ENCODE measurements at regions of chr2 and their contacts with region 1.

Region 1: GRCh38 chr2:181143790-181144300 is 163.4 kb downstream of the UBE2E3 start:
- DNase-seq: peak in 25 of 35 experiments; percentile 7 to 74 (median 39)
- ATAC-seq: peak; percentile 64 to 87 (median 73)
- H3K4me3 ChIP-seq: no peak overlapping the region
- H3K4me3 Mint-ChIP-seq: peak overlapping the region in 2 of 3 donors; percentile 18 to 48
- H3K27ac ChIP-seq: peak overlapping the region; percentile 88
- H3K27ac Mint-ChIP-seq: peak overlapping the region; percentile 90 to 100
- H3K4me1 ChIP-seq: peaks cover 33 to 63% of the 10 kb centered on the region in 2 experiments
- H3K4me1 Mint-ChIP-seq: peaks cover 73 to 79% (median 74%) of the 10 kb centered on the region in 3 donors
- H3K27me3 ChIP-seq: no peaks in the 10 kb centered on the region
- H3K27me3 Mint-ChIP-seq: no peaks in the 10 kb centered on the region

Region 2: DNA sequence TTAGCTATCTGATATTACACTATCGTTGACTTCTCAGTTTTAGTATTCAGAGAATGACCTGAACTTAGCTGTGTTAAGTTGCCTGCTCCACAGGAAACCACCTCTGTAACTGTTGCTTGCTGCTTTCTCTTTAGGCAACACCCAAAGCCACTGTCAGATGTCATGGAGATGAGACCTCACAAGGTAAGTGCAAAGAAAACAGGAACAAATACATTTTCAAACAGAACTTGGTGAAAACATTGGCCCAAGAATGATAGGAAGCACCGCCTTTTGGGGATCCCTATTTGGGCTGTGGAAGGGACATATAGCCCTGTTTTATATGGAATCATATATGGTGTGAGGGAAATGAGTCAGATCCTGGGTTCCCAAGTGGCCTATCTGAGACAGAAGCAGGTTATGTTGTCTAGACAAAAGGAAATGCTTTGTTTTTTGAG is 20.0 kb before region 1 on chr2:
- CTCF ChIA-PET with region 1: interaction called, 3 to 8 read pairs
- POLR2A ChIA-PET with region 1: interaction called, 6 to 10 read pairs
- DNase-seq: peak in 34 of 35 experiments; percentile 24 to 89 (median 60)
- ATAC-seq: peak; percentile 94 to 98 (median 96)
- H3K4me3 ChIP-seq: peak overlapping the region; percentile 6 to 39
- H3K4me3 Mint-ChIP-seq: peak overlapping the region; percentile 65 to 72 (median 70)
- H3K27ac ChIP-seq: peak overlapping the region; percentile 100
- H3K27ac Mint-ChIP-seq: peak overlapping the region; percentile 96 to 100
- H3K4me1 ChIP-seq: peaks cover 28 to 51% of the 10 kb centered on the region in 2 experiments
- H3K4me1 Mint-ChIP-seq: peaks cover 63 to 81% (median 73%) of the 10 kb centered on the region in 3 donors
- H3K27me3 ChIP-seq: no peaks in the 10 kb centered on the region
- H3K27me3 Mint-ChIP-seq: no peaks in the 10 kb centered on the region

Region 3: GRCh38 chr2:181305301-181306123 is 161.7 kb after region 1 on chr2:
- CTCF ChIA-PET with region 1: interaction called in 1 of 2 experiments, 3 read pairs
- POLR2A ChIA-PET with region 1: interaction called in 1 of 2 experiments, 14 read pairs
- DNase-seq: peak in 20 of 35 experiments; percentile 2 to 63 (median 24)
- ATAC-seq: peak; percentile 50 to 77 (median 60)
- H3K4me3 ChIP-seq: peak overlapping the region in 1 of 2 donors; percentile 4
- H3K4me3 Mint-ChIP-seq: peak overlapping the region; percentile 42 to 80 (median 51)
- H3K27ac ChIP-seq: peak overlapping the region; percentile 98
- H3K27ac Mint-ChIP-seq: peak overlapping the region; percentile 96 to 100
- H3K4me1 ChIP-seq: peaks cover 44 to 79% of the 10 kb centered on the region in 2 experiments
- H3K4me1 Mint-ChIP-seq: peaks cover 74 to 82% (median 82%) of the 10 kb centered on the region in 3 donors
- H3K27me3 ChIP-seq: no peaks in the 10 kb centered on the region
- H3K27me3 Mint-ChIP-seq: no peaks in the 10 kb centered on the region

Region 4: DNA sequence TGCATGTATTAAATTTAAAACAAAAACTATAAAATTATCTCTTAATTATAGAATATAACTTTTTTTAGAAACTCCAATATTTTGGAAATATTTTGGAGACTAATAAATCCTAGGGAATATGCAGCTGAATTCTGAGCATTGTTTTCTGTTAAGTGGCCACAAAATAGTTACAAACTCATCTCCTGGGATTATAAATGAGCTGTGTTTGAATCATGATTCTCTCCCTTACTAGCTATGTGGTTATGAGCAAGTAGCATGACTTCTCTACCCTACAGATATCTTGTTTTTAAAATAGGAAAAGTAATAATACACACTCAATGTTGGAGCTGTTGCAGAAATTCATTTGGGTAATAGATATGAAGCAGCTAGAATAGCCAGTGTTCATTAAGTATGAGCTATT is 175.4 kb after region 1 on chr2:
- CTCF ChIA-PET with region 1: no interaction called
- POLR2A ChIA-PET with region 1: no interaction called
- DNase-seq: no peak
- ATAC-seq: no peak
- H3K4me3 ChIP-seq: no peak overlapping the region
- H3K4me3 Mint-ChIP-seq: no peak overlapping the region
- H3K27ac ChIP-seq: no peak overlapping the region
- H3K27ac Mint-ChIP-seq: no peak overlapping the region
- H3K4me1 ChIP-seq: peaks cover 3 to 16% of the 10 kb centered on the region in 2 experiments
- H3K4me1 Mint-ChIP-seq: peaks cover 24 to 27% (median 24%) of the 10 kb centered on the region in 3 donors
- H3K27me3 ChIP-seq: no peaks in the 10 kb centered on the region
- H3K27me3 Mint-ChIP-seq: no peaks in the 10 kb centered on the region